Activated CD8-positive, alpha-beta T cell treated with anti-CD3 and anti-CD28 coated beads for 36 hours (primary cell): ENCODE measurements at regions of chr11 and their contacts with region 1.

Region 1: GRCh38 chr11:72024069-72024754 is 25.5 kb downstream of the IL18BP start:
- DNase-seq: no peak
- ATAC-seq: no peak
- H3K4me3 Mint-ChIP-seq: no peak overlapping the region
- H3K27ac Mint-ChIP-seq: peak overlapping the region; percentile 47
- H3K4me1 Mint-ChIP-seq: peaks cover 33% of the 10 kb centered on the region
- H3K27me3 Mint-ChIP-seq: no peaks in the 10 kb centered on the region
- CTCF ChIP-seq: no peak

Region 2: DNA sequence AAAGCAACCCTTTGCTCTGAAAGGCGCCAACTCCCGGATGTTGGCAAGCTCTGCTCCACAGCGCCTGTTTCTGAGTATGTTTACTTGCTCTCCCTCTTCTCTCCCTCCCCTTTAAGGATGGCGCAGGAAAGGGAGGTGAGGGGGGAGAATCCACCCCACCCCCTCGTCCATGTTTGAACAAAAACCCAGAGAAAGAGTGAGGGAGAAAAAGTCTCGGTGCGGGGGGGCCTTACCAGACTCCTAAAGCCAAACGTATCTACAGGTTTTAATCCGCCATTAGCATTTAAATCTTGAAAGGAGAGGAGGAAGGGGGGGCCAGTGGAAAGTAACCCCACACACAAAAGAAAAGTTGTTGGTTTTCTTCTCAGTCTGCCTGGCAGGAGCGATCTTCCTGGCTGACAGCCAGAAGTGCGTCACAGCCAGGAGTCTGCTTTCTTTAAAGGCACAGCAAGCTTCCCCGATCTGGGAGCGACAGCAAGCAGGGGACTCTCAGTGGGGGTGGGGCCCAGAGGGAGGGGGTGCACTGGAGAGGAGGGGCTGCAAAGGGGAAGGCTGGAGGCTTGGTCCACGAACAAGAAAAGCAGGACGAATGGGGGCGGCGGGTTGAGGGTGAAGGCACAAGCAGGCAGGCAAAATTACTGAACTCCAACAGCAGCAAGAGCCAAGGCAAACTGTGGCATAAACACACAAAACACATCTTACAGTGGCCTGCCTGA is 16.7 kb after region 1 on chr11:
- CTCF ChIA-PET with region 1: interaction called, 54 read pairs
- POLR2A ChIA-PET with region 1: interaction called, 33 read pairs
- intact Hi-C with region 1: no loop called
- DNase-seq: peak; percentile 79
- ATAC-seq: peak; percentile 72
- H3K4me3 Mint-ChIP-seq: no peak overlapping the region
- H3K27ac Mint-ChIP-seq: no peak overlapping the region
- H3K4me1 Mint-ChIP-seq: peaks cover 32% of the 10 kb centered on the region
- H3K27me3 Mint-ChIP-seq: no peaks in the 10 kb centered on the region
- CTCF ChIP-seq: no peak

Region 3: GRCh38 chr11:72048766-72049456 is 24.7 kb after region 1 on chr11:
- CTCF ChIA-PET with region 1: interaction called, 11 read pairs
- POLR2A ChIA-PET with region 1: no interaction called
- intact Hi-C with region 1: no loop called
- DNase-seq: no peak
- ATAC-seq: no peak
- H3K4me3 Mint-ChIP-seq: no peak overlapping the region
- H3K27ac Mint-ChIP-seq: no peak overlapping the region
- H3K4me1 Mint-ChIP-seq: peaks cover 5% of the 10 kb centered on the region
- H3K27me3 Mint-ChIP-seq: no peaks in the 10 kb centered on the region
- CTCF ChIP-seq: no peak

Region 4: GRCh38 chr11:72058416-72059034 is 34.3 kb after region 1 on chr11:
- CTCF ChIA-PET with region 1: interaction called, 10 read pairs
- POLR2A ChIA-PET with region 1: interaction called, 4 read pairs
- intact Hi-C with region 1: no loop called
- DNase-seq: no peak
- ATAC-seq: no peak
- H3K4me3 Mint-ChIP-seq: no peak overlapping the region
- H3K27ac Mint-ChIP-seq: no peak overlapping the region
- H3K4me1 Mint-ChIP-seq: no peaks in the 10 kb centered on the region
- H3K27me3 Mint-ChIP-seq: no peaks in the 10 kb centered on the region
- CTCF ChIP-seq: no peak

Region 5: DNA sequence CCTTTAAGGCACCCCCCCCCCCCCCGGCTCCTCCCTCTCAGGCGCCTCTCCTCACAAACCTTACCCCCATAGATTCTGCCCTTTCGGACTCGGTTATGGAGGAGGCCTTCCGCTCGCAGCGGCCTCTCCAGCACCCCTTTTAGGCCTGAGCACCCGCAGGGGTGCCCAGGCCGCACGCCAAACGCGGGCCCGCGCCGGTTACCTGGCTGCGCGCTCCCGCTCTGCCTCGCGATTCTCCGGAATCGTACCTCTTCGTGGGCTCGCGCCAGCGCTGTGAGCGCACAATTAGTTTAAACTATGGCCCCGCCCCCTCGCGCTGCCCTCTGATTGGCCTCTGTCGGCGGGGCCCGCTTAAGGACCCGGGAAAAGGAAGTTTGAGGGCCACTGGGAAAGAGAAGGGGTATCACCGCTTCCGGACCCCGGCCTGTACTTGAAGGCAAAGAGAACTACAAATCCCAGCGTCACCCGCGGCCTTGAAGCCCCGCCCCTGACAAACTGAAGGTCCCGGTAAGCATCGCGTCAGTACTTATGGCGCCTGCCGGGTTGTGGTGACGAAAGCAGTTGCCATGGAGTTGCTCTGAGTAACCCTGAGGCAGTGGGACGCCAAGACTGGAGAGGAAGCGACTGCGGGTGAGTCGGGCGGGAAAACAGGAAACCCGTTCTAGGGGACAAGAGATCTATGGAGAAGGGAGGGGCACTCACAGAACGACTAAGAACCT is 56.2 kb after region 1 on chr11 and contains the starts of genes LRRC51 and NUMA1:
- CTCF ChIA-PET with region 1: interaction called, 37 read pairs
- POLR2A ChIA-PET with region 1: interaction called, 4 read pairs
- intact Hi-C with region 1: no loop called
- DNase-seq: peak; percentile 100
- ATAC-seq: peak; percentile 93
- H3K4me3 Mint-ChIP-seq: peak within 1 kb of the TSS; percentile 99
- H3K27ac Mint-ChIP-seq: peak within 1 kb of the TSS; percentile 99
- H3K4me1 Mint-ChIP-seq: peaks cover 34% of the 10 kb centered on the region
- H3K27me3 Mint-ChIP-seq: no peaks in the 10 kb centered on the region
- CTCF ChIP-seq: no peak
- total RNA-seq, gene LRRC51: 7.0 to 7.7 TPM
- total RNA-seq, gene NUMA1: 165 to 169 TPM

Region 6: DNA sequence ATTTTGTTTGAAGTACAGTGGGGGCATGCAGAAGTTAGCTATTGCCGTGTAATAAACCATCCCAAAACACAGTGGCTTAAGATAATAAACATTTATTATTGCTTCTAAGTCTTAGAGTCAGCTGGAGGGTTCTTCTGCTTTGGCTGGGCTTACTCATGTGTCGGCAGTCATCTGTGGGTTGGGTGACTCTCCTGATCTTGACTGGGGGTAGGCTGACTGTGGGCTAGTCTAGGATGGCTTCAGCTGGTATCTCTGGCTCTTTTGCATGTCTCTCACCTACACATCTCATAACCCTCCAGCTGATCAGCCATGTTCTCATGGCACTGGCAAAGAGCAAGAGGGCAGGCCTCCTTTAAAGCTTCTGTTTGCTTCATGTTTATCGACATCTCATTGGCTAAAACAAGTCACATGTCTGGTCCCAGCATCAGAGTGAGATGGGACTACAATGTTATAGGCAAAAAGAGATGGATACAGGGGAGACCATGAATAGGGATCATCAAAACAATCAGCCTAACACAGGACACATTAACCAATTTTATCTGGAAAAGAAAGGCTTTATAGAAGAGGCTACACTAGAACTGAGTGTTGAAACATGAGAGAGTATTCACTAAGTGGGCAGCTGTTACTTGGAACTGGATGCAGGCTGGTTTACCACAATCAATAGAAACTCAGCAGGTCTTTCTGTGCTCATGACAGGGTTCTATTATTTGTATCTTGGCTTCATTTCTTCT is 61.6 kb after region 1 on chr11:
- CTCF ChIA-PET with region 1: interaction called, 278 read pairs
- POLR2A ChIA-PET with region 1: interaction called, 6 read pairs
- intact Hi-C with region 1: loop called (anchors 2 kb)
- DNase-seq: no peak
- ATAC-seq: no peak
- H3K4me3 Mint-ChIP-seq: no peak overlapping the region
- H3K27ac Mint-ChIP-seq: peak overlapping the region; percentile 39
- H3K4me1 Mint-ChIP-seq: peaks cover 23% of the 10 kb centered on the region
- H3K27me3 Mint-ChIP-seq: no peaks in the 10 kb centered on the region
- CTCF ChIP-seq: no peak

Region 7: GRCh38 chr11:72091005-72091691 is 66.9 kb after region 1 on chr11:
- CTCF ChIA-PET with region 1: interaction called, 278 read pairs
- POLR2A ChIA-PET with region 1: interaction called, 6 read pairs
- intact Hi-C with region 1: loop called (anchors 2 kb)
- DNase-seq: peak; percentile 82
- ATAC-seq: peak; percentile 97
- H3K4me3 Mint-ChIP-seq: no peak overlapping the region
- H3K27ac Mint-ChIP-seq: peak overlapping the region; percentile 75
- H3K4me1 Mint-ChIP-seq: peaks cover 5% of the 10 kb centered on the region
- H3K27me3 Mint-ChIP-seq: no peaks in the 10 kb centered on the region
- CTCF ChIP-seq: peak; percentile 80